ENCODE measurements at regions of chr1 and their contacts with region 1.

Region 1: DNA sequence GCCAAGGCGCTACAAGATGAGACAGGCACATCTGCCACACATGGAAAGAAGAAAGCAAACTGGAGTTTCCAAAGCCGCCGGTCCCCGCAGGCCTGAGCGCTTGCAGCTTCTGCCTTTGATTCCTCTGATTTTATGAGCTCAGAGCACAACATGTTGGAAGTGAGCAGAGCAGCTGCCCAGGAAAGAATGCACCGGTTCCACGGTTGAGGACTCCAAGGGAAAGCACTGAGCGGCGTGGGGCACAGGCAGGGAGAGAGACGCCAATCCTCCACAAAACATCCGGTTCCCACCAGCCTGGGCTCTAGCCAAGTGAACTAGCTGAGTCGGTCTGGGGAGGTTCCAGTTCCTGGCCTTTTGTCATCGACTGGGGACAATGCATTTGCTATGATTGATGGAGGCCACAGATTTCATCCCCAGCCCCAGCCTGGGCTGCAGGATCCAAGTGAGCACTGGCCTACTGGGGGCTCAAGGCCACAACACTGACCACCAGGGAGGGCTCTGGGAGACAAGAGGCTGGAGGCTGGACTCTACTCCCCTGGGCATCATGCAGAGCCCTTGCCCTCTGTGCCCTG is 253.1 kb upstream of the IRF2BP2 start:
- DNase-seq: no peak
- ATAC-seq: no peak
- H3K4me3 ChIP-seq: no peak overlapping the region
- H3K4me3 Mint-ChIP-seq: no peak overlapping the region
- H3K27ac ChIP-seq: no peak overlapping the region
- H3K27ac Mint-ChIP-seq: peak overlapping the region in 1 of 2 donors; percentile 24
- H3K4me1 ChIP-seq: peaks cover 24% of the 10 kb centered on the region
- H3K4me1 Mint-ChIP-seq: peaks cover 19 to 23% of the 10 kb centered on the region in 2 donors
- H3K27me3 ChIP-seq: no peaks in the 10 kb centered on the region
- H3K27me3 Mint-ChIP-seq: peaks cover 5 to 10% of the 10 kb centered on the region in 2 donors
- CTCF ChIP-seq: no peak

Region 2: DNA sequence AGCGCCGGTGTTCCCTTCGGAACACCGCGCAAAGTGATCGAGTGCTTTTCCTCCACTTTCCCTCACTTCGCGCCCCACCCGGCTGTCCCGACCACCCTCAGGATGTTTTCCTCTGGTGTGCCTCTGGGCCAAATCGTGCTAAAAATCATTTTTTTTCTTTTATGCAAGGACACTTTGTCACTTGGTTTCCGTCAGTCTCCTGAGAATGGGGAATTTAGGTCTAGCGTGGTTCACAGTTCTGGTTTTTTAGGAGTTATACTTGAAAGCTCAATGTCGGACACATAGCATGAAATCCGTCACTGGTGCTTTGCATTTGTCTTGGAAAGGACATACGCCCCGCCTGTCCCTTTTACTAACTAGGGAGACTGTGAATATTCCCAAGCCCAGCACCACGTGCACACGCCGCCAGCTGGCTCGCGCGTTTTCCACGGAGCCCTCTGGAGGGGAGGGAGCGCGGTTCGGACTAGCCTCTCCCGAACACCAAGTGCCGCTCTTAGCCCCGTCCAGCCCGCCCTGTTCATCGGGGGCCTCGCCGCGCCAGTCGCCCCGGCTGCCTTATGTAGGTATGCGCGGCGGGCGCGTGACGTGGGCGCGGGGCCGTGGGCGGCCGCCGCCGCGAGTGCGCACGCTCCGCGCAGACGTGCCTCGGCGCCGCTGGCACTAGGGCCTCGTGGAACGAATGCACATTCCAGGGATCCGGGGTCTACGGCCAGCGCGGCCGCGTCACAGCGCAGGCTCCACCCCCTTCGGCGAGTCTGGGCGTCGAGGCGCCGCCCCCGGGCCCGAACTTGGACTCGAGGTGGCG is 252.5 kb before region 1 on chr1:
- intact Hi-C with region 1: loop called (anchors 10 kb)
- DNase-seq: peak; percentile 89 to 97
- ATAC-seq: peak; percentile 51 to 77 (median 64)
- H3K4me3 ChIP-seq: peak overlapping the region; percentile 92
- H3K4me3 Mint-ChIP-seq: peak overlapping the region; percentile 94
- H3K27ac ChIP-seq: peak overlapping the region; percentile 99
- H3K27ac Mint-ChIP-seq: peak overlapping the region; percentile 96 to 98
- H3K4me1 ChIP-seq: peaks cover 53% of the 10 kb centered on the region
- H3K4me1 Mint-ChIP-seq: peaks cover 59 to 60% of the 10 kb centered on the region in 2 donors
- H3K27me3 ChIP-seq: no peaks in the 10 kb centered on the region
- H3K27me3 Mint-ChIP-seq: no peaks in the 10 kb centered on the region
- CTCF ChIP-seq: no peak

Region 3: DNA sequence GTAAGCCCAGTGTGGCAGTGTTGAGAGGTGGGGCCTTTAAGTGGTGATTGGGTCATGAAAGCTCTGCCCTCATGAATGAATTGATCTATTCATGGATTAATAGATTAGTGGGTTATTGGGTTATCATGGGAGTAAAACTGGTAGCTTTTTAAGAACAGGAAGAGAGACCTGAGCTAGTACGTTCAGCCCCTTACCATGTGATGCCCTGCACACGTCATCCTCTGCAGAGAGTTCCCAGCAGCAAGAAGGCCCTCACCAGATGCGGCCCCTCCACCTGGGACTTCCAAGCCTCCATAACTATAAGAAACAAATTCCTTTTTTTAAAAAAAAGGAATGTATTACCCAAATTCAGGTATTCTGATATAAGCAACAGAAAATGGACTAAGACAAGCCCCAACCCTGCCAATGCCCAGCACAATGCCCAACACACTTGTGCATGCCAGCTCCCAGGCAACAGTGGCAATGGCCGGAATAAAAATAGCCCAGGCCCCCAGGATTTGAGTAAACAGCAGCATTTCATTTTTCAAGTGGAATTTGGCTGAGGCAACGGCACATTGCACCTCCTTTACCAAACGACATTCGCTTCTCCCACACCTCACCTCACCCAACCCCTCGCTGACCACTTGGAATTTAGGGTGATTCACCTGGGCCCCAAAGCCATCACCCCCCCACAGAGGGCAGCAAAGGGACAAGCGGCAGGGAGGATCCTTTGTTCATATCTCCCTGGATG is 49.7 kb after region 1 on chr1:
- intact Hi-C with region 1: loop called (anchors 2 kb)
- DNase-seq: peak in 1 of 2 donors; percentile 59
- ATAC-seq: peak in 1 of 3 donors; percentile 30
- H3K4me3 ChIP-seq: no peak overlapping the region
- H3K4me3 Mint-ChIP-seq: peak overlapping the region; percentile 55
- H3K27ac ChIP-seq: peak overlapping the region; percentile 64
- H3K27ac Mint-ChIP-seq: peak overlapping the region; percentile 79 to 94
- H3K4me1 ChIP-seq: peaks cover 30% of the 10 kb centered on the region
- H3K4me1 Mint-ChIP-seq: peaks cover 45 to 51% of the 10 kb centered on the region in 2 donors
- H3K27me3 ChIP-seq: no peaks in the 10 kb centered on the region
- H3K27me3 Mint-ChIP-seq: no peaks in the 10 kb centered on the region
- CTCF ChIP-seq: no peak

Measured in natural killer cell (primary cell).